ENCODE measurements at regions of chr4 and their contacts with region 1.

Region 1: GRCh38 chr4:93897559-93897958 is 69.0 kb downstream of the ATOH1 start:
- DNase-seq: peak; percentile 39
- H3K4me3 Mint-ChIP-seq: no peak overlapping the region
- H3K27ac Mint-ChIP-seq: no peak overlapping the region
- H3K4me1 Mint-ChIP-seq: no peaks in the 10 kb centered on the region
- H3K27me3 Mint-ChIP-seq: no peaks in the 10 kb centered on the region
- CTCF ChIP-seq: peak; percentile 26

Region 2: GRCh38 chr4:93908778-93909177 is 11.2 kb after region 1 on chr4:
- CTCF ChIA-PET with region 1: interaction called, 12 read pairs
- POLR2A ChIA-PET with region 1: interaction called, 3 read pairs
- intact Hi-C with region 1: no loop called
- DNase-seq: no peak
- H3K4me3 Mint-ChIP-seq: no peak overlapping the region
- H3K27ac Mint-ChIP-seq: no peak overlapping the region
- H3K4me1 Mint-ChIP-seq: peaks cover 5% of the 10 kb centered on the region
- H3K27me3 Mint-ChIP-seq: no peaks in the 10 kb centered on the region
- CTCF ChIP-seq: no peak

Region 3: GRCh38 chr4:93994175-93994994 is 96.8 kb after region 1 on chr4:
- CTCF ChIA-PET with region 1: no interaction called
- POLR2A ChIA-PET with region 1: no interaction called
- intact Hi-C with region 1: no loop called
- DNase-seq: no peak
- H3K4me3 Mint-ChIP-seq: no peak overlapping the region
- H3K27ac Mint-ChIP-seq: no peak overlapping the region
- H3K4me1 Mint-ChIP-seq: no peaks in the 10 kb centered on the region
- H3K27me3 Mint-ChIP-seq: no peaks in the 10 kb centered on the region
- CTCF ChIP-seq: no peak

Region 4: GRCh38 chr4:94127707-94128328 is 230.3 kb after region 1 on chr4:
- CTCF ChIA-PET with region 1: interaction called, 37 read pairs
- POLR2A ChIA-PET with region 1: no interaction called
- intact Hi-C with region 1: loop called (anchors 1 kb)
- DNase-seq: peak; percentile 72
- H3K4me3 Mint-ChIP-seq: no peak overlapping the region
- H3K27ac Mint-ChIP-seq: no peak overlapping the region
- H3K4me1 Mint-ChIP-seq: no peaks in the 10 kb centered on the region
- H3K27me3 Mint-ChIP-seq: no peaks in the 10 kb centered on the region
- CTCF ChIP-seq: peak; percentile 58

Region 5: DNA sequence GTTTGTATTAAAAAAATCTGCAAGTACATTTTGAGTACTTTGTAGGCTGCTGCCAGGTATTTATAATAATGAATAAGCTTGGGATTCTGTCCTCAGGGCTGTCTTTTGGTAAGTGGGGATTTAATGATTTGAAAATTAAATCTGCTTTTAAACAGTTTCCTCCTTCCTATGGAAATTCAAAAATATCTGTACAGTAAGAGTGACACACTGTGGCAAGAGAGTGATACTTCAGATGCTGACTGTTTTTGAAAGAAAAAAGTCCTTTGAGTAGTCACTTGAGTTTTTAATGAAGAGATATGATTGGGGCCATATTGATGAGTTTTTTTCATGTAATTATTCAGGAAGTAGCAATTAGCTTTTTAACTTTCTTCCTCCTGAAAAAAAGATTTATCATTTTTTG is 359.3 kb after region 1 on chr4:
- CTCF ChIA-PET with region 1: no interaction called
- POLR2A ChIA-PET with region 1: no interaction called
- intact Hi-C with region 1: loop called (anchors 5 kb)
- DNase-seq: peak; percentile 13
- H3K4me3 Mint-ChIP-seq: no peak overlapping the region
- H3K27ac Mint-ChIP-seq: no peak overlapping the region
- H3K4me1 Mint-ChIP-seq: peaks cover 2% of the 10 kb centered on the region
- H3K27me3 Mint-ChIP-seq: no peaks in the 10 kb centered on the region
- CTCF ChIP-seq: peak; percentile 24